AG04449 (cell line): ENCODE measurements at regions of chr17 and their contacts with region 1.

Region 1: DNA sequence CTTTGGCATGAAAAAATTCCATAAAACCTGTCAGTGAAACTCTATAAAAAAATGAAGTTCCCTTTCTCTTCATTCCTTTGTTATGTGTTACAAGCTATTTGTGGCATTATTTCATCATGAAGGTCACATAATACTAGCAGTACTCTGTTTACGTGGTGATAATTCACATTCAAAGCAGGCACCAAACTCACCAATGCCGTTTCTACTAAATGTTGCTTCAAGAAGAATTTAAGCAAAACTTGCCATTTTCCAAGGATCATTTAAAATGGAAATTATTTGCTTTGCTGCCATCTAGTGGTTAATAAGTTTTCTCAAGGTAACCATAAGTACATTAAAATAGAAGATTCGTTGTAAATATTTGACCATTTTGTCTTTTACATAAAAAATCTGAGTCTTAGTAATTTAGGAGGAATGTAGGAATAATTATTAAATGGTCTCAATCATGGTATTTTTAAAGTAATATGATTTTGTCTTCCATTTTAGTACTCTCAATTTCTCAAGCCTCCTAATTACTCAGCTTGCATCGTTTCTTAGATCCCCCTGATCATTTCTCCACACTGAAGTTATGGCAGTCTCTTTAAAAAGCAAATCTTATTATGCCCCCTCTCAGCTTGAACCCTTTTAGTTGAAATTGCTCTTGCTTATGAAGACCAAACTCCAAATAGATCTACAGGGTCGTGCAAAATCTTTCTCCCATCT is 80.8 kb downstream of the OMG start:
- DNase-seq: peak; percentile 74
- H3K4me3 ChIP-seq: no peak overlapping the region
- CTCF ChIP-seq: no peak

Region 2: GRCh38 chr17:30443721-30444120 is 772.5 kb before region 1 on chr17:
- CTCF ChIA-PET with region 1: no interaction called
- POLR2A ChIA-PET with region 1: no interaction called
- DNase-seq: no peak
- H3K4me3 ChIP-seq: no peak overlapping the region
- CTCF ChIP-seq: no peak

Region 3: DNA sequence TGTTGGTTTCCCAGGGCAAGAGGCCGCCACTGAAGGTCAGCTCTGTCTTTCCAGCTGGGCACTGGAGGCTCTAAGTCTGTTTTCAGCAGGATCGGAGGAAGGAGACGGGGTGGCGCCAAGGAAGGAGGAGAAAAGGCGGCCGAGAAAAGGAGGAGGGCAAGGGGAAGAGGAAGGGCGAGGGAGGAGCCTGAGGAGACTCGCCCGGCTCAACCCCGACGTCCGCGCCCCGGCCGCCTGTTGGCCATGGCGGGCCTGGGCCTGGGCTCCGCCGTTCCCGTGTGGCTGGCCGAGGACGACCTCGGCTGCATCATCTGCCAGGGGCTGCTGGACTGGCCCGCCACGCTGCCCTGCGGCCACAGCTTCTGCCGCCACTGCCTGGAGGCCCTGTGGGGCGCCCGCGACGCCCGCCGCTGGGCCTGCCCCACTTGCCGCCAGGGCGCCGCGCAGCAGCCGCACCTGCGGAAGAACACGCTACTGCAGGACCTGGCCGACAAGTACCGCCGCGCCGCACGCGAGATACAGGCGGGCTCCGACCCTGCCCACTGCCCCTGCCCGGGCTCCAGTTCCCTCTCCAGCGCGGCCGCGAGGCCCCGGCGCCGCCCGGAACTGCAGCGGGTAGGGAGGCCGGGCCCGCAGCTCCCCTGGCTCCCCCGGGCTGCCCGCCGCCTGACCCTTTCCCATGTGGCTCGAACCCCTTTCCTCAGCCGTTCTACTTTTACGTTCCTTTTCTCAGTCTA is 245.2 kb before region 1 on chr17 and contains the start of gene RNF135:
- CTCF ChIA-PET with region 1: interaction called, 45 read pairs
- POLR2A ChIA-PET with region 1: no interaction called
- DNase-seq: no peak
- H3K4me3 ChIP-seq: peak within 1 kb of the TSS; percentile 66
- CTCF ChIP-seq: peak; percentile 35

Region 4: DNA sequence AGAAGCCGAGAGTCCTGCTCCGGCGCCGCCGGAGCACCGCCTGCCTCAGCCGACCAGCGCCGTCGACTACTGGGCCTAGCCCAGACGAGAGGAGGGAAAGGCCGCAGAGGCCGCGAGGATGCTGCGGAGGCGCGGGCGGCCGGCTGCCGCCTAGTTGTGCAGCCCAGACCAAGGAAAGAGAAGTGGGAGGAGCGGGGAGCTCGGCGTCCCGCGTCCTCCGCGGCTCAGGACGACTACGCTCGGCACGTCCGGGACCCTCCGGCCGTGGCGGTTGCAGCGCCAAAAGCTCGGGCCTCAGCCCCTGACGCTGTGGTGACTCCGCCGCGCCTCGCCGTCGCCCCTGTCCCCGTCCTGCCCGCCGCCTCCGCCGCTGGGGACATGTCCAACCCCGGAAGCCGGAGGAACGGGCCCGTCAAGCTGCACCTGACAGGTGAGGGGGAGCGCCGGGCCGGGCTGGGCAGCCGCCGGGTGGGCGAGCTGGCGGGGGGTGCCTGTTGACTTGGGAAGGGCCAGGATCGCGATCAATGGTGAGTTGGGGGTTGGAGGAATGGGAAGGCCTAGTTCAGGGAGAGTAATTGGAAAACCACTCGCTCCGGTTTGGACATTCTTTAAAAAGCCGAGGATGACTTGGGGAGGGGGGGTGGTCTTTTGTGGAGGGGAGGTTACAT is 207.7 kb before region 1 on chr17:
- CTCF ChIA-PET with region 1: interaction called, 61 read pairs
- POLR2A ChIA-PET with region 1: no interaction called
- DNase-seq: no peak
- H3K4me3 ChIP-seq: peak overlapping the region; percentile 49
- CTCF ChIP-seq: no peak

Region 5: GRCh38 chr17:31015639-31016038 is 200.6 kb before region 1 on chr17:
- CTCF ChIA-PET with region 1: interaction called, 61 read pairs
- POLR2A ChIA-PET with region 1: no interaction called
- DNase-seq: no peak
- H3K4me3 ChIP-seq: no peak overlapping the region
- CTCF ChIP-seq: no peak

Region 6: DNA sequence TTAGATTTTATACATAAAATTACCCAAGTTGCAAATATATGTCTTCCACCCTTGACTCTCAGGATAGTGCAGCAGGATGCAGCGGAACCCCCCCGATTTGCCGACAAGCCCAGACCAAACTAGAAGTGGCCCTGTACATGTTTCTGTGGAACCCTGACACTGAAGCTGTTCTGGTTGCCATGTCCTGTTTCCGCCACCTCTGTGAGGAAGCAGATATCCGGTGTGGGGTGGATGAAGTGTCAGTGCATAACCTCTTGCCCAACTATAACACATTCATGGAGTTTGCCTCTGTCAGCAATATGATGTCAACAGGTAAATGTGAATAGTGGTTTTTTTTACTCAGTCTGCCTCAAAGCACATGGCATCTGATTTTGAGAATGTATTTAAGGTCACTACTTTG is 10.2 kb after region 1 on chr17:
- CTCF ChIA-PET with region 1: interaction called, 24 read pairs
- POLR2A ChIA-PET with region 1: no interaction called
- DNase-seq: no peak
- H3K4me3 ChIP-seq: no peak overlapping the region
- CTCF ChIP-seq: no peak

Region 7: GRCh38 chr17:31629696-31630470 is 413.7 kb after region 1 on chr17:
- CTCF ChIA-PET with region 1: no interaction called
- POLR2A ChIA-PET with region 1: no interaction called
- DNase-seq: peak; percentile 23
- H3K4me3 ChIP-seq: no peak overlapping the region
- CTCF ChIP-seq: no peak